Activated CD8-positive, alpha-beta T cell treated with anti-CD3 and anti-CD28 coated beads for 36 hours (primary cell): ENCODE measurements at regions of chr2 and their contacts with region 1.

Region 1: GRCh38 chr2:100060875-100061274 is 81.5 kb downstream of the AFF3 start:
- DNase-seq: peak; percentile 36
- ATAC-seq: peak; percentile 88
- H3K4me3 Mint-ChIP-seq: no peak overlapping the region
- H3K27ac Mint-ChIP-seq: peak overlapping the region; percentile 79
- H3K4me1 Mint-ChIP-seq: peaks cover 37% of the 10 kb centered on the region
- H3K27me3 Mint-ChIP-seq: peaks cover 2% of the 10 kb centered on the region
- CTCF ChIP-seq: no peak

Region 2: DNA sequence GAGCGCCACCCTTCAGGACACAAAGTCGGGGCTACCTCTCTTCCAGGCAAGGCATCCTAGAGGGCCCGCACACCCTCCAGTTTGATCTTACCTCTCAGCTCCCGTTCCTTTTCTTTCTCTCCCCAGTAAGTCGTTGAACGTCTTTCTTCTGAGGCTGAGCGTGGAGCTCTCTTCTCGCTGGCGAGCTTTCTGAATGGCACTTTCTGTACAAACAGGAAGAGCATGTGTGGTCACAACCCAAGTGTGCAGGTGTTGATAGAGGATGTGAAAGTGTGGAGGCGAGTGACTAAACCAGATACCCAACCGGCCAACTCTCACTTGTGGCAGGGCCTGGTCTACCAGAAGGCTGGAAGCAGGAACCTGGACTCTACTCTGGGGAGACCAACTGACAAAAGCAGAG is 81.5 kb after region 1 on chr2 and contains the start of gene AFF3:
- CTCF ChIA-PET with region 1: no interaction called
- POLR2A ChIA-PET with region 1: no interaction called
- intact Hi-C with region 1: loop called (anchors 5 kb)
- DNase-seq: peak; percentile 86
- ATAC-seq: peak; percentile 89
- H3K4me3 Mint-ChIP-seq: peak within 1 kb of the TSS; percentile 77
- H3K27ac Mint-ChIP-seq: peak within 1 kb of the TSS; percentile 89
- H3K4me1 Mint-ChIP-seq: peaks cover 52% of the 10 kb centered on the region
- H3K27me3 Mint-ChIP-seq: peaks cover 2% of the 10 kb centered on the region
- CTCF ChIP-seq: no peak
- total RNA-seq, gene AFF3: 3.1 to 3.5 TPM